Activated T-helper 2 cell treated with anti-CD3 and anti-CD28 coated beads, Interferon-gamma antibody, Interleukin-2, Interleukin-4, amounts not matched to agents 10 μg/mL and 5 μg/mL and 100 μg/mL, durations not matched to agents 14 hours and 24 hours and 36 hours (primary cell): ENCODE measurements at regions of chr2 and their contacts with region 1.

Region 1: DNA sequence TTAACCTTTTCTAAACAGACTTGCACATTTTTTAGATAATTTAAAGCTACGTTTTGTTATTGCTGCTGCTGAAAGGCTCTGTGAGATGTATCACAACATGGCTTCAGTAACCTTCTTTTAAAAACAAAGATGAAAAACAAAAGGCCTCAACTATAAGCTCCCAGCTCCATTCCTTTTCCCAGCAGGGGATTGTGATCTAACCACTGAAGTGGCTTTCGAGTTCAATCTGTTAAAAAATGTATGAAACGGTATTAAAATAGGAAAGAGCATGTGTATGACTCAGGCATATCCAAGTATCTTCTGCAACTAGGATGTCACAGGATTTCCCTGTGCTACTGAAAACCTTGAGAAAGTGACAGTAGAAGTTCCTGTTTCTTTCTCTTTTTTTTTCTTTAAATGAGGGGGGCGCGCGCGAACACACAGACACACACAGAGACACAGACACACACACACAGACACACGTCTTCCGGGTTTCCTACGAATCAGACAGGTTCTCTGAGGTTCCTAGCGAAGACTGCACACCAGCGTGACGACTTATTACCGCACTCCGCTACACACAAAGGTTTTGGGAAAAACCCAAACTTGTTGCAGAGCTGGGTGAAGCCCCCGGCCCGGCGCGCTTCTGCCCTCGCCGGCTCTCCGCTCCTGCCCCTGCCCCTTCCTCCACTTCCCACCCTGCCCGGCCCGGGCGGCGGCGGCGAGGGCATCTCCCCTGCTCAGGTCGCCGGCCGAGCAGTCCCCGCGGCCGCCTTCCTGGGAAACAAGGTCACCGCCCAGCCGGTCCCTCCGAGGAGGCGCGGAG is 86.8 kb downstream of the RBMS1 start:
- DNase-seq: peak; percentile 60
- H3K4me3 Mint-ChIP-seq: peak overlapping the region; percentile 86
- H3K27ac Mint-ChIP-seq: peak overlapping the region; percentile 80
- H3K4me1 Mint-ChIP-seq: peaks cover 74% of the 10 kb centered on the region
- H3K27me3 Mint-ChIP-seq: no peaks in the 10 kb centered on the region

Region 2: DNA sequence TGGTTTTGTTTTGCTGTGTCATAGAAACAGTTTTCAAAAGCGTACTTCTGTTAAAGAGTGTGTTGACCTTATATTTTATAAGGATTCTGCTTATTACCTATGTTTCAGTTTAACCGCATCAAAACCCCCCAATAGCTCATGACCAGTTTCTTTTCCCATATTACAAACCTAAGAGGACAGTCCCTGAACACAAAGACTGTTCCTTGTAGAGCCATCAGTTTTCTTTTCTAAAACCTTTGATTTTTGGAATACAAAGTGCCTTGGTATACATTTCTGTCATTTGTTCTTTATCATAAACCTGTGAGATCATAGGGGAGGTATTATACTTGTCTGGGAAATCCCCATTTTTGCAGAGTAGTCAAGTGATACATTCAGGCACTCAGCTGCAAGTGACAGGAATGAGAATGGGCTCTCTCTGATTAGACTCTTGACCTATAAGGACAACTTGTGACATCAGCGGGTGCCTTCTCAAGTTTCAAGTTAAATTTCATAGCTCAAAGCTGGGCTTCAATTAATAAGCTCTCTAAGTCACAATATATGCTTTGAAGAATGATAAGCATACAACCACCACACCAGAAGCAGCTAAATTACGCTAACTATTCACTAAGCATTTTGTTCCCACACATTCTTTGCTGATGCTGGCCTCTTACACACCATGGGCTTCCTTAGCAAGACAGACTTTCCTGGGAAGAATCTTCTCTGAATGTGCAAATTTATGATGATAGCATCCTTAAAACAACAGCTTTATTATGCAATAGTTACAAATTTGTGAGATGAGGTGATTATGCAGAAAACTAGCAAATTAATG is 511.3 kb before region 1 on chr2:
- intact Hi-C with region 1: loop called (anchors 10 kb)
- DNase-seq: no peak
- H3K4me3 Mint-ChIP-seq: no peak overlapping the region
- H3K27ac Mint-ChIP-seq: peak overlapping the region; percentile 84
- H3K4me1 Mint-ChIP-seq: peaks cover 64% of the 10 kb centered on the region
- H3K27me3 Mint-ChIP-seq: no peaks in the 10 kb centered on the region

Region 3: DNA sequence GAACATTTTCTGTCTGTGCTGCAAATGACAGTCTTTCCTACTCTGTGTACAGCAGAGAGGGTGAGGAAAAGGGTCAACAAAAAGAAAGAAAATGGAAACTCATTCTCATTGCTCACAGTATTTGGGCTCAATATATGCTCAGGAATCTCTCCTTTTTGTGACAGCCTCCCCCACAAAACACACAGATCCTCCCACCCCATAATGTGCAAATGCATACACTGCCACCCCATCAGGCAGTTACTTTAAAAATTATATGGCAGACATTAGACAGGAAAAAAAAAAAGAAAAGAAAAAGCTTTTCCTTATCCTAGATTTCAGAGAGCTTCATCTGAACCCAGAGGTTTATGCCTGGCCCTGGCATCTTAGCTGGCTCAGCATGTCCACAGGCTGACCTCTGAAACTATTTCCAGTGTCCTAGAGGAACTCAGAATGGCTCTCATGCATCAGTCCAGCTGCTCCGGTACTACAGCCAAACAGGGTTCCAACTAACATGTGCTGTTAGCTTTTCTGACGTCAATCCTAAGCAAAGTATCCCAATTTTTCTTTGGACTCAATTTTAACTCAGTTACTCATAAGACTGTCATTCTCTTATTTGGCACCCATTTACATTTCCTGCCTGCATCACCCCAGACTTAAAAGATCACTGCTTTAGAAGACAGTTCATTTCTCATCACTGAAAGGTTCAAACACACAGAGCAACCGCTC is 19.1 kb before region 1 on chr2:
- intact Hi-C with region 1: loop called (anchors 2 kb)
- DNase-seq: no peak
- H3K4me3 Mint-ChIP-seq: no peak overlapping the region
- H3K27ac Mint-ChIP-seq: no peak overlapping the region
- H3K4me1 Mint-ChIP-seq: peaks cover 58% of the 10 kb centered on the region
- H3K27me3 Mint-ChIP-seq: no peaks in the 10 kb centered on the region

Region 4: DNA sequence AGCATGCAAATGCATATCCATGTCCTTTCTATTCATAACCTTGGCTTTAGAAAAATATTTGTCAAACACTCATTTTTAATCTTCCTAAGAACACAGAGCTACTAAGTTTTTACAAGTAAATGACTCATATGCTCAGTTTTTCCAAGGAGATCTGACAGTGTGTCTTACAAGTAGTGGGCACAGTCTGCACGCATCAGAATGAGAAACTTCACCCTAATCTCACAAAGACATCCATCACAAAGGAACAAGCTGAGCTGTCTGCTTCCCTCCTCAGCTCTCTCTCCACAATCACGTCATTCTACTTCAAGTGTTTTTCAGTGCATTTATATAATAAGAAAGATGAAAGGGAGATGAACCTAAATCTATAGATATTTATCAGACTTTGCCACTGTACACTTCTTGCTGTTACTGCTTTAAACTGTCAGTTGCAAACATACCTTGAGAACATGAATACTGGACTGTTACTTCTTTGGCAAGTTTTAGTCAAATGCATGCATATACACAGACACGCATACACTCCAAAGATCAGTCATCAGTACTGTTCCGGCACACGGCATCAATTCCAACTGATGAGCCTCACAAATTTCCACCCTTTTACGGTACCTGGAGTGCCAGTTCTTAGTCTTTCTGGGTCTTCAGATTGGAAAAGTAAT is 11.1 kb after region 1 on chr2:
- intact Hi-C with region 1: loop called (anchors 1 kb)
- DNase-seq: no peak
- H3K4me3 Mint-ChIP-seq: no peak overlapping the region
- H3K27ac Mint-ChIP-seq: peak overlapping the region; percentile 85
- H3K4me1 Mint-ChIP-seq: peaks cover 61% of the 10 kb centered on the region
- H3K27me3 Mint-ChIP-seq: no peaks in the 10 kb centered on the region

Region 5: GRCh38 chr2:160482673-160483072 is 75.9 kb after region 1 on chr2:
- intact Hi-C with region 1: loop called (anchors 2 kb)
- DNase-seq: peak; percentile 41
- H3K4me3 Mint-ChIP-seq: no peak overlapping the region
- H3K27ac Mint-ChIP-seq: peak overlapping the region; percentile 63
- H3K4me1 Mint-ChIP-seq: peaks cover 55% of the 10 kb centered on the region
- H3K27me3 Mint-ChIP-seq: no peaks in the 10 kb centered on the region

Region 6: DNA sequence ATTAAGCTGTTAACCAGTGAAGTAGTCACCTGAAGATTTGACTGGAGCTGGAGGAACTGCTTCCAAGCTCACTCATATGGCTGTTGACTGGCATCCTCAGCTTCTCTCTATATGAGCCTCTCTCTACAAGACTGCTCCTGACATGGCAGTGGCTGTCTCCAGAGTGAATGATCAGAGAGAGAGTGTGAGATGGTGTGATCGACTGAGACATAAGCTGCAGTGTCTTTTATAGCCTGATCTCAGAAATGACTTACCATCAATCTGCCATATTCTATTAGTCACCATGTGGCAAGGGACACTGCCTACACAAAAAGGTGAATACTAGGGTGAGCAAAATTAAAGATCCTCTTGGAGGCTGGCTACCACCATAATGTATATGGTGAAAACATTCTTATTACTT is 94.6 kb after region 1 on chr2:
- intact Hi-C with region 1: no loop called
- DNase-seq: no peak
- H3K4me3 Mint-ChIP-seq: no peak overlapping the region
- H3K27ac Mint-ChIP-seq: no peak overlapping the region
- H3K4me1 Mint-ChIP-seq: peaks cover 7% of the 10 kb centered on the region
- H3K27me3 Mint-ChIP-seq: peaks cover 34% of the 10 kb centered on the region